ENCODE measurements at regions of chr17 and their contacts with region 1.

Region 1: GRCh38 chr17:57987580-57988421 is at the start of gene VEZF1:
- DNase-seq: peak in 2 of 3 donors; percentile 84 to 91
- H3K4me3 ChIP-seq: peak within 1 kb of the TSS; percentile 73 to 90 (median 84)
- H3K27ac ChIP-seq: peak within 1 kb of the TSS; percentile 77 to 91
- H3K4me1 ChIP-seq: peaks cover 26 to 50% (median 27%) of the 10 kb centered on the region in 4 experiments
- H3K27me3 ChIP-seq: no peaks in the 10 kb centered on the region

Region 2: GRCh38 chr17:57823469-57824401 is 164.1 kb before region 1 on chr17:
- CTCF ChIA-PET with region 1: no interaction called
- POLR2A ChIA-PET with region 1: no interaction called
- DNase-seq: no peak
- H3K4me3 ChIP-seq: no peak overlapping the region
- H3K27ac ChIP-seq: no peak overlapping the region
- H3K4me1 ChIP-seq: no peaks in the 10 kb centered on the region
- H3K27me3 ChIP-seq: peaks cover 0 to 3% (median 0%) of the 10 kb centered on the region in 5 experiments

Region 3: DNA sequence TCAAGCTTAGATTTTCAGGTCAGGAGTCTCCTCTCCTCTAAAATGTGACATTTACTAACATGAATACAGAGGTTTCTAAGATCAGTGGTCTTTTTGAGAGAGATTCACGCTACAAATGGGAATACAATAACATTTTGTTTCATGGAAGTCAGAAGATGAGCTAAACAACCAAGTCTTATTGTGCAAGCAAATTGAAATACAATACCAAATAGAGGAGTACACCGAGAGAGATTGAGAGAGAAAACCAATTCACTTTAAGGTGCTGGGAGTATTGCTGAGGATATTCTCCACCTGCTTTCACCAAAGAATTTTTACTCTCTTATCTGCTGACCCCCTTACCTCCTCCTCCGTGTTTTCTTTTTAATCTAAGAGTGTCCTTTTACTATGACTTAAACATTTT is 11.2 kb before region 1 on chr17:
- CTCF ChIA-PET with region 1: interaction called, 14 read pairs
- POLR2A ChIA-PET with region 1: no interaction called
- DNase-seq: no peak
- H3K4me3 ChIP-seq: no peak overlapping the region
- H3K27ac ChIP-seq: no peak overlapping the region
- H3K4me1 ChIP-seq: peaks cover 0 to 8% (median 6%) of the 10 kb centered on the region in 4 experiments
- H3K27me3 ChIP-seq: no peaks in the 10 kb centered on the region

Region 4: DNA sequence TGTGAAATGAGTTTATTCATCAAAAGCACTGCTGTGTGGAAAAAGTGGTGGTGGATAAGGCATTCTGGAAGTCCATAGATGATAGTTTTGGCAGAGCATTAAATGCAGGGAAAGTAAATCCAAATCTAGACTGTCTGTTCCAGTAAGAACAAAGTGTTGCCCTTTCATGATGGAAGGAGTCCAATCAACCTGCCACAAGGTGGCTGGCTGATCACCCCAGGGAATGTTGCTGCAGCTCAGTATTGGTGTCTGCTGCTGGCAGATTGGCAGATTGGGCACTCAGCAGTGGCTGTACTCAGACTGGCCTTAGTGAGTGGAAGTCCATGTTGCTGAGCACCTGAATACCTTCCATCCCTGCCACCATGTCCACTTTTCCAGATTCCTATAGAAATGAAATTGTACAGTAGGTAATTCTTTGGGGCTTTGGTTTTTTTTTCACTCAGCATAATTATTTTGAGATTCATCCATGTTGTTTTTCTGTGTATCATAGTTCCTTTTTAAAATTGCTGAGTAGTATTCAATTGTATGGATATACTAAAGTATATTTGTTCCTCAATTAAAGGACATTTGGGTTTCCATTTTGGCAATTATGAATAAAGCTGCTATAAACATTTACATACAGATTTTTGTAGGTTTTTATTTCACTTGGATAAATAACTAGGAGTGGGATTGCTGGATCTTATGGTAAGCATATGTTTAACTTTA is 109.7 kb after region 1 on chr17:
- CTCF ChIA-PET with region 1: no interaction called
- POLR2A ChIA-PET with region 1: no interaction called
- DNase-seq: no peak
- H3K4me3 ChIP-seq: no peak overlapping the region
- H3K27ac ChIP-seq: no peak overlapping the region
- H3K4me1 ChIP-seq: no peaks in the 10 kb centered on the region
- H3K27me3 ChIP-seq: no peaks in the 10 kb centered on the region

Region 5: DNA sequence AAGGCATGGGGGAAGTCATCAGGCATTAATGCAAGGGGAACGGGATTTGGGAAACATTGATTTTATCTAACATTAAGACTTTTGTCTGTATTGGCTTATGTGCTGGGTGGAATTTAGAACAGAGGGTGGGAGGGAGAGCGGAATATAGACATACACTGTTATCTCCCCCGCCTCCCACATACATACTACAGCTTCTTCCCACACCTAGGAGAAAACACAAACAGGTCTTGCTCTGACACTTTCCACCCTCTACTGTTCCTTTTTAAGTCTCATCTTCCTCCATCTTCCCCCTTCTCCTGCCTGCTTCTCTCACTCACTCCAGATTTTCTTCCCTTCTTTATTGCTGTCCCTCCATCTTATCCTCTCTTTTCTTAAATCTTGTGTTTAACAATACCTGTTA is 160.8 kb after region 1 on chr17:
- CTCF ChIA-PET with region 1: no interaction called
- POLR2A ChIA-PET with region 1: no interaction called
- DNase-seq: no peak
- H3K4me3 ChIP-seq: no peak overlapping the region
- H3K27ac ChIP-seq: no peak overlapping the region
- H3K4me1 ChIP-seq: peaks cover 5 to 16% (median 13%) of the 10 kb centered on the region in 4 experiments
- H3K27me3 ChIP-seq: peaks cover 0 to 2% (median 0%) of the 10 kb centered on the region in 5 experiments